ENCODE measurements at regions of chr6 and their contacts with region 1.

Region 1: GRCh38 chr6:44456070-44456965 is 68.8 kb downstream of the CDC5L start:
- H3K4me3 Mint-ChIP-seq: no peak overlapping the region
- H3K27ac Mint-ChIP-seq: no peak overlapping the region
- H3K4me1 Mint-ChIP-seq: peaks cover 12% of the 10 kb centered on the region
- H3K27me3 Mint-ChIP-seq: peaks cover 5% of the 10 kb centered on the region

Region 2: DNA sequence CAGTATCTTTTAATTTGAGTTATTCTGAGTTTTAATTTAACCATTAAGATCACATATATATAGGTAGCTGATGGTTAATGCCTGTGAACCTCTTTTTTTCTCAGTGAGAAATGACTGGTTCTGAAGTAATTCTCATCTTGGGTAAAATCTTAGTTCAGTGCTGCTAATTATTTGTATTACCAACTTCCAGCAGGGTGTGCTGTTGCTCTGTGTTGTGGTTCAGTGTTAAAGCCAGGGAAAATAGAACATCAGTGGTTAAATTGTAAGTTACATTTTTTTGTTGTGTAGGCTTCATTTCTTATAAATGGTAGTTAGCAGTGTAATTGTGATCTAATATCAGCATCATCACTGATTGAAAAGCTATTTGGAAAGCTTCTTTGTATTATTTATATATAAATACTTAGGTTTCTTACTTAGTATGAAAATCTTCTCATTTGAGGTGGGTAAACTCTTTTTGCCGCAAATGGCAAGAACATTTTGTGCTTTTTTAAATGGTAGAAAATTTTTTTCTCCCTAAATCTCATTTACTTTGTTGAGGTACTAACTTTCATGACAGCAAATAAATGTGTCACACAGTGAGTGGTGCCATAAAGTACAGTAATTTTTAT is 25.1 kb before region 1 on chr6:
- intact Hi-C with region 1: loop called (anchors 1 kb)
- H3K4me3 Mint-ChIP-seq: no peak overlapping the region
- H3K27ac Mint-ChIP-seq: no peak overlapping the region
- H3K4me1 Mint-ChIP-seq: peaks cover 10% of the 10 kb centered on the region
- H3K27me3 Mint-ChIP-seq: no peaks in the 10 kb centered on the region